AG04449 (cell line): ENCODE measurements at regions of chr17 and their contacts with region 1.

Region 1: DNA sequence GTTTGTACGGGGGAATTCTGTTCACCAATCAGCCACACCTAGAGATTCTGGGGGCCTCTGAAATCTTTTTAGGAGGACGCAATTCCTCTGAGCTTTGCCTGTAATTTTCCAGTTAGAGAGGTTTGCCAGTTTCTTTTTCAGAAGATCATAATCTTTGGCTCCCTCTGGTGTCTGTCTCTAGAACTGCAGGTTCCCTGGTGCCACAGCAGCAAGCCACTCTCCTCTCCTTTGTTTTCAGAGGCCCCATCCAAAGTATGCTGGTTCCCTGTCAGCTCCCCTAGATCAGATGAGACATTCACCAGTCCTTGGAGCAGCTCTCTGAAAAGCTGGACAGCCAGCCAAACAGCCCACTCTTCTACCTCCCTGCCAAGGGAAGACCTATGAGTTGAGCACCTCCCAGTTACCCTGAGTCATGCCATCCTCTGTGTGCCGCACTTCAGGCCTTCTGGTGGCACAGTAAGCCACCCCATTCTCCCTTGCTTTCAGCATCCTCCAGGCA is 36.1 kb downstream of the RNF112 start:
- DNase-seq: peak; percentile 19
- H3K4me3 ChIP-seq: no peak overlapping the region
- CTCF ChIP-seq: peak; percentile 67

Region 2: DNA sequence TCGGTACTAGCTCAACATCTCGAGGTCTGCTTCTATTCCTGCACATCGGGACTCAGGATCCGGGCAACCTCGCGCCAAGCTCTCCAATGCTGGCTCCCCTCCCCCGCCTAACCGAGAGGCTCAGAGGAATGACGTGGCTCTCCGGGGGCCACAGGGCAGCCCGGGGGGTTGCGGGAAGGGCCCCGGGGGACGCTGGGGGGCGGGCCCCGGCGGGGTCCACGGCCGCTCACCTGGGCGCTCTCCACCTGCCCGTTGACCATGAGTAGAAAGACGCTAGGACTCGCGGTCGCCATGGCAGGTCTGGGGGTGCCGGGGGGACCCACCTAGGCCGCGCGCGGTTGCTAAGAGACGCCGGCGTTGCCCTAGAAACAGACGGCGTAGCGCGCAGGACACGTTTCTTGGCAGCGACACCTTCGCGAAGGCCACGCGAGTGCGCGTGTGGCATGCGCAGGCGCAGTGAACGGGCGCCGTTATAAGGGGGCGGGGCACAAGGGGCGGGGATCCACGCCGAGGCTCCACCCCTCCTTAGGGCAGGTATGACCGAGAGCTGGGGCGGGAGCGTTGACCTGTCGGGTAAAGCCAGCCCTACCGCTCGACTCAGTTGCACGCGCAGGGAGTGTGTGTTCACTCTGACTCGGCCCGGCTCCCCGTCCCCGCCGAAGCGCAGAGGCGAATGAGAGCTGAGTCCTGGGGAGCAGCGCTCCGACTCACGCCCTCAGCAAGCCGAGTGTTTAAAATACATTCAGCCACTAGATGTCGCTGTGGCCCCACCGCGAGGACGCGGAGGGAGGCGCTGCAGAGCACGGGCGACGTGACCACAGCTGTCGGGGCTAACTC is 84.6 kb before region 1 on chr17 and contains the start of gene B9D1:
- CTCF ChIA-PET with region 1: interaction called, 293 read pairs
- POLR2A ChIA-PET with region 1: interaction called, 9 read pairs
- DNase-seq: no peak
- H3K4me3 ChIP-seq: peak within 1 kb of the TSS; percentile 90
- CTCF ChIP-seq: peak; percentile 93

Region 3: GRCh38 chr17:19377602-19378392 is 69.3 kb before region 1 on chr17:
- CTCF ChIA-PET with region 1: interaction called, 34 read pairs
- POLR2A ChIA-PET with region 1: interaction called, 16 read pairs
- DNase-seq: peak; percentile 90
- H3K4me3 ChIP-seq: peak overlapping the region; percentile 87
- CTCF ChIP-seq: peak; percentile 9

Region 4: DNA sequence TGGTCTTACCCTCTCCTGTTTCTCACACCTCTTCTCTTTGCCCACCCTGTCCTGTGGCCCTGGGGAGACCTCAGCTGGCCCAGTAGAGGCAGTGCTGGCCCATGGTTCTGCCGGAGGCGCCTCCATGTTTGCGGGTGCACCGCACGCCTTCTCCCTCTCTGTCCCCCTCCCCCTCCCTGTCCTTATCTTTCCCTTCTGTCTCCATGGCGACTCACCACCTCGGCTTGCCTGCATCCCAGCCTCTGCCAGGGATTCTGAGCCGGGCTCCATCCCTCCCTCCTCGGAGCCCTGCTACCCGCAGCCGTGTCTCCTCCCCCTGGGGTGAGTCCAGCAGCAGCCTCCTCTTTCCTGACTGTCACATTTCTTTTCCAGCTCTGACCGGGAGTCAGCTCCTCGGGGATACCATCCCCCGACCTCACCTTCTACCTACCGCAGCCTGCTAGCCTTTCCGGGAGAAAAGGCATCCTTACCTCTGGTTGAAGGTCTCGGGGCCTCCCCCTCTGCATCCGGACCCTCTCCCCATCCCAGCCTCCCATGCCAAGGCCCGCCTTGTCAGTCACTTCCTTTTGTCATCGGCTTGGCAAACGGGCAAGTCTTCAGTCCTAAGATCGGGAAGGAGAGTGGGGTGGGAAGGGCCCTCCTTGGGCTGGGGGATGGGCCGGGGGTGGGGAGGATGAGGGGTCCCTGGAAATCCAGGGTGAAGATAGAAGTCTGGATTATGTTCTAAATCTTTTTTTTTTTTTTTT is 36.1 kb before region 1 on chr17 and contains the start of gene RNF112:
- CTCF ChIA-PET with region 1: interaction called, 10 read pairs
- POLR2A ChIA-PET with region 1: no interaction called
- DNase-seq: no peak
- H3K4me3 ChIP-seq: peak within 1 kb of the TSS; percentile 29
- CTCF ChIP-seq: peak; percentile 8

Region 5: GRCh38 chr17:19433727-19434340 is 13.3 kb before region 1 on chr17:
- CTCF ChIA-PET with region 1: interaction called, 58 read pairs
- POLR2A ChIA-PET with region 1: no interaction called
- DNase-seq: no peak
- H3K4me3 ChIP-seq: no peak overlapping the region
- CTCF ChIP-seq: no peak

Region 6: GRCh38 chr17:19766422-19767270 is 319.5 kb after region 1 on chr17:
- CTCF ChIA-PET with region 1: interaction called, 22 read pairs
- POLR2A ChIA-PET with region 1: no interaction called
- DNase-seq: no peak
- H3K4me3 ChIP-seq: no peak overlapping the region
- CTCF ChIP-seq: peak; percentile 100